Vagina (tissue), 2 donors: ENCODE measurements at regions of chr11 and their contacts with region 1.

Region 1: DNA sequence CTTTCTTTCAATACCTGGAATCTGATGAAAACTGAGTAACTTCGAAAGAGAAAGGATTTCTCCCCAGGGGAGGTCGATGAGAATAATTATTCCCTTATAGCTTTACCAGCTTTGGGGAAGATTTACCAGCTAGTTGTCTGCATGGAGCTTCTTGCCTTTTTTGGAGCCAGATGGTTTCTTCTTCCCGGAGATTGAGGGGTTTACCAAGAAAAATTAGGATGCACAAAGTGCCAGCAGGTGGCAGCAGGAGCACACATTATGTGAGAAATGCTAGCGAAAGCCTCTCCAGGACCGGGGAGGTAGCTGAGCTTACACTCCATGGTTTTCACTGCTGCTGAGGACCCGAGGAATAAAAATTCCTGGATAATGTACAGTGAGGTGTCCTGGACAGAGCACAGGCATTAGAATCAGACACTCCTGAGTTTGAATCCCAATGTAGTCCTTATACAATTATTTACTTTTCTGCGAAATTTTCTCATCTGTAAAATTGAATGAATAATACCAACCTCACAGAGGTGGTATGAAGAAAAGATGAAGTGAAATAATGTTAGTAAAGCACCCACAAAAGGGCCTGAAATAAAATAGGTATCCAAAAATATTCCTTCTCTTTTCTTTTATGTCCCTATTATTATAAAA is 46.0 kb upstream of the PARVA start:
- DNase-seq: no peak
- H3K4me3 ChIP-seq: no peak overlapping the region
- H3K27ac ChIP-seq: no peak overlapping the region
- H3K4me1 ChIP-seq: peaks cover 8% of the 10 kb centered on the region
- H3K27me3 ChIP-seq: no peaks in the 10 kb centered on the region
- CTCF ChIP-seq: peak; percentile 76 to 94 (median 87)
- POLR2A ChIP-seq: no peak

Region 2: DNA sequence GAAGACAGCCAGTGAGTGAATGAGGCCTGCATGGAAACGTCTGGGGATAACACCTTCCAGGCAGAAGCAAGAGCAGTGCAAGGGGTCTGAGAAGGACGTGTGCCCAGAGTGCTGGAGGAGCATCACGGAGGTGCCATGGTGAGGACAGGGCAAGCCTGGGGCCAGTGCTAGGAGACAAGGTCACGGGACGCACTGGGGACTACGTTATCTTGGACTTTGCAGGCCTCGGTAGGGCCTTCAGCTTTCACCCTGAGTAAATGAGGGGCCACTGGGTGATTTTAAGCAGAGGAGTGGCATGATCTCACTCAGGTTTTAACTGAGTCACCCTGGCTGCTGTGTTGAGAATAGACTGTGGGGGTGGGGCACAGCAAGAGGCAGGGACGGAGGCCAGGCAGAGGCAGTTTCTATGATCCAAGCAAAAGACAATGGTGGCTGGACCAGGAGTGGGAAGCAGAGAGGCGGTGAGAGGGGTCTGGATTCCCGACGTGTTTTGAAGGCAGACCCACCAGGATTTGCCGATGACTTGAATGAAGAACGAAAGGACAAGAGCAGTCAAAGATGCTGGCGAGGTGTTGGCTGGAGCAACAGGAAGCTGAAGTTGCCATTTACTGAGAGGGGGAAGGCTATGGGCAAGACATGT is 56.7 kb before region 1 on chr11:
- intact Hi-C with region 1: no loop called
- DNase-seq: no peak
- H3K4me3 ChIP-seq: no peak overlapping the region
- H3K27ac ChIP-seq: no peak overlapping the region
- H3K4me1 ChIP-seq: no peaks in the 10 kb centered on the region
- H3K27me3 ChIP-seq: no peaks in the 10 kb centered on the region
- CTCF ChIP-seq: no peak
- POLR2A ChIP-seq: no peak

Region 3: GRCh38 chr11:12893787-12894672 is 562.7 kb after region 1 on chr11:
- intact Hi-C with region 1: loop called (anchors 5 kb)
- DNase-seq: no peak
- H3K4me3 ChIP-seq: no peak overlapping the region
- H3K27ac ChIP-seq: no peak overlapping the region
- H3K4me1 ChIP-seq: peaks cover 11% of the 10 kb centered on the region
- H3K27me3 ChIP-seq: no peaks in the 10 kb centered on the region
- CTCF ChIP-seq: peak; percentile 73 to 89 (median 84)
- POLR2A ChIP-seq: no peak